OCI-LY7 (cell line): ENCODE measurements at regions of chr19 and their contacts with region 1.

Region 1: GRCh38 chr19:2084993-2085720 is 11.0 kb downstream of the MOB3A start:
- DNase-seq: peak; percentile 98
- H3K4me3 ChIP-seq: peak overlapping the region; percentile 85
- H3K27ac ChIP-seq: peak overlapping the region; percentile 94
- H3K4me1 ChIP-seq: peaks cover 80% of the 10 kb centered on the region
- CTCF ChIP-seq: no peak

Region 2: GRCh38 chr19:1672038-1672768 is 413.0 kb before region 1 on chr19:
- CTCF ChIA-PET with region 1: no interaction called
- POLR2A ChIA-PET with region 1: no interaction called
- intact Hi-C with region 1: loop called (anchors 5 kb)
- DNase-seq: peak; percentile 83
- H3K4me3 ChIP-seq: peak overlapping the region; percentile 65
- H3K27ac ChIP-seq: peak overlapping the region; percentile 98
- H3K4me1 ChIP-seq: peaks cover 56% of the 10 kb centered on the region
- CTCF ChIP-seq: peak; percentile 91

Region 3: DNA sequence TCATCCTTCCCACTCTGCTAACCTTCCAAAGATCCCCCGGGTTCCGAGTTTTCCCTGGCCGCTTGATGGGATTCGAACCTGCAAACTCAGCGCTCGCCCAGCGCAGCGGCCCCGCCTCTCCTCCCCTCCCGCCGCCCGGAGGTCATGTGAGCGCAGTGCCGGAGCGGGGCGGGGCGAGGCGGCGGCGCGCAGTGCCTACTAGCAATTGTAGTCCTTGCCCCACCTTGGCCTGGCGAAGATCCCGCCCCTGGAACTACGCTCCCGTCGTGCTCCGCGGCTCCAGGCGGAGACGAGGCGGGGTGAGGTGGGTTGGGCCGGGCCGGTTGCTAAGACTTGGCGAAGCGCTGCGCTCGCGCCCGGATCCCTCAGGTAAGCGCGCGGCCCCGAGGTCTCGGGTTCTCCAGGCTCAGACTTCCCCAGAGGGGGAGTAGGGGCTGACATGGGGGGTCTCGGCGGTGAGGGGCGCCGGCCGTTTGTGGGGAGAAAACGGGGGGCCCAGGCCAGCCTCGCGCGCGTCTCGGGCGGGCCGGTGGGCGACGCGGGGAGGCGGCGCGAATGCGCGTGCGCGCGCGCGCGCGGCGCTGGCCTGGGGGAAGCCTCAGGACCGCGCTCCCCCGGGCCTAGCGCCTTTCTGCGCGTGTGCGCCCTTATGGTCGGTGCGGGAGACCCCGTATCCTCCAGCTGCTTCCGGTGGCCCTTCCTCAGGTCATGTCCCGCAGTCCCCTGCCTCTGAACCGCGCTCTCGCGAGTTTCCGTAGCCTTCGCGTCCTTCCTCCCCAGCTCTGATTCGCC is 179.9 kb before region 1 on chr19 and contains the starts of genes ADAT3 and SCAMP4:
- CTCF ChIA-PET with region 1: no interaction called
- POLR2A ChIA-PET with region 1: interaction called, 4 read pairs
- intact Hi-C with region 1: loop called (anchors 10 kb)
- DNase-seq: peak; percentile 99
- H3K4me3 ChIP-seq: peak within 1 kb of the TSS; percentile 71
- H3K27ac ChIP-seq: peak within 1 kb of the TSS; percentile 97
- H3K4me1 ChIP-seq: peaks cover 32% of the 10 kb centered on the region
- CTCF ChIP-seq: no peak
- total RNA-seq, gene ADAT3: 5.6 and 7.9 TPM in 2 replicates
- total RNA-seq, gene SCAMP4: 13.4 and 21.3 TPM in 2 replicates

Region 4: DNA sequence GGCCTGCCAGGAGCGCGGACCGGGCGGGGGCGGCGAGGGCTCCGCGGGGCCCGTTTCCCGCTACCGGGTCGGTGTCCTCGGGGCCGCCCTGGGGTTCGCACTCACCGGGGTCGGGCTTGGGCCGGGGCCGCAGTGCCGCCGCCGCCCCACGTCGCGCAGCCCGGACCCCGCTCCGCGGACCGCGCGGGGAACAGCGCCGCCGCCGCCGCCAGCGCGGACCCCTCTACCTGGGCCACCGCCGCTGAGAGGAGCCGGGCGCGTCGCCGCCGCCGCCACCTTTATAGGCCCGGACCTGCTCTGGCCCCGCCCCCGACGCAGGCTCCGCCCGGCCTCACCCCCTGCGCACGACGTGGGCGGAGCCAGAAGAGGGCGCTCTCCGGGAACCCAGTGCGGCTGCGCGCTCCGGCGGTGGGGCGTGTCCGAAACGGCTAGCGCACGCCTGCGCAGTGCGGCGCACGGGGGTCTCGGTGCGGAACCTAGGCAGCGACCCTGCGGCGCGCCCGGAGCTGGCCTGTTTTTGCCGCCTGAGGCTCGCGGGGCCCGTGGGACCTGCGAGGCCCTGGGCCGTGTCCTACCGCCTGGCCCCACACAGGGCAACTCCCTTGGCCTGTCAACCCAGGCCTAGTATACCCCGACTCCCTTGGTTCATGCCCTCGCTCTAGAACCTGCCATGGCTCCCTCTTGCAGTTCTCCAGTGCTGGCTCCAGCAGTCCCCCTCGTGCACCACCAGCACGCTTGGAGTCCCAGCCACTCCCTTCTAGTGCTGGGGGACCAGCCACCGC is 34.0 kb before region 1 on chr19 and contains the start of gene MKNK2:
- CTCF ChIA-PET with region 1: no interaction called
- POLR2A ChIA-PET with region 1: interaction called, 10 read pairs
- intact Hi-C with region 1: loop called (anchors 2 kb)
- DNase-seq: peak; percentile 93
- H3K4me3 ChIP-seq: peak within 1 kb of the TSS; percentile 98
- H3K27ac ChIP-seq: peak within 1 kb of the TSS; percentile 70
- H3K4me1 ChIP-seq: peaks cover 58% of the 10 kb centered on the region
- CTCF ChIP-seq: peak; percentile 69
- total RNA-seq, gene MKNK2: 97.0 and 115 TPM in 2 replicates

Region 5: GRCh38 chr19:2061495-2062381 is 23.4 kb before region 1 on chr19:
- CTCF ChIA-PET with region 1: interaction called, 3 read pairs
- POLR2A ChIA-PET with region 1: interaction called, 6 read pairs
- intact Hi-C with region 1: loop called (anchors 2 kb)
- DNase-seq: peak; percentile 100
- H3K4me3 ChIP-seq: peak overlapping the region; percentile 80
- H3K27ac ChIP-seq: peak overlapping the region; percentile 73
- H3K4me1 ChIP-seq: peaks cover 65% of the 10 kb centered on the region
- CTCF ChIP-seq: 0 out of 2 replicates have a peak, but pooled peaks have one; percentile 27

Region 6: DNA sequence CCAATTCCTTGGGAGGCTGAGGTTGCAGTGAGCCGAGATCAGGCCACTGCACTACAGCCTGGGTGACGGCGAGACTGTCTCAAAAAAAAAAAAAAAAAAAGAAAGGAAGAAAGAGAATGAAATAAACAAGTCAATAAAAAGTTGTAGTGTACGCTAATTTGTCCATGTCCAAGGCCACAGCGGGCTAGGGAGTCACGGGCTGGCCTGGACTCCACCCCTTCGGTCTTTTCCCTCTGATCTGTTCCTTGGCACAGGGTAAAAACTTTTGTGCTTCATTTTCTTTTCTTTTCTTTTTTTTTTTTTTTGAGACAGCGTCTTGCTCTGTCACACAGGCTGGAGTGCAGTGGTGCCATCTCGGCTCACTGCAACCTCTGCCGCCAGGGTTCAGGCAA is 14.7 kb before region 1 on chr19:
- CTCF ChIA-PET with region 1: no interaction called
- POLR2A ChIA-PET with region 1: interaction called, 6 read pairs
- intact Hi-C with region 1: loop called (anchors 1 kb)
- DNase-seq: no peak
- H3K4me3 ChIP-seq: no peak overlapping the region
- H3K27ac ChIP-seq: no peak overlapping the region
- H3K4me1 ChIP-seq: peaks cover 36% of the 10 kb centered on the region
- CTCF ChIP-seq: no peak

Region 7: DNA sequence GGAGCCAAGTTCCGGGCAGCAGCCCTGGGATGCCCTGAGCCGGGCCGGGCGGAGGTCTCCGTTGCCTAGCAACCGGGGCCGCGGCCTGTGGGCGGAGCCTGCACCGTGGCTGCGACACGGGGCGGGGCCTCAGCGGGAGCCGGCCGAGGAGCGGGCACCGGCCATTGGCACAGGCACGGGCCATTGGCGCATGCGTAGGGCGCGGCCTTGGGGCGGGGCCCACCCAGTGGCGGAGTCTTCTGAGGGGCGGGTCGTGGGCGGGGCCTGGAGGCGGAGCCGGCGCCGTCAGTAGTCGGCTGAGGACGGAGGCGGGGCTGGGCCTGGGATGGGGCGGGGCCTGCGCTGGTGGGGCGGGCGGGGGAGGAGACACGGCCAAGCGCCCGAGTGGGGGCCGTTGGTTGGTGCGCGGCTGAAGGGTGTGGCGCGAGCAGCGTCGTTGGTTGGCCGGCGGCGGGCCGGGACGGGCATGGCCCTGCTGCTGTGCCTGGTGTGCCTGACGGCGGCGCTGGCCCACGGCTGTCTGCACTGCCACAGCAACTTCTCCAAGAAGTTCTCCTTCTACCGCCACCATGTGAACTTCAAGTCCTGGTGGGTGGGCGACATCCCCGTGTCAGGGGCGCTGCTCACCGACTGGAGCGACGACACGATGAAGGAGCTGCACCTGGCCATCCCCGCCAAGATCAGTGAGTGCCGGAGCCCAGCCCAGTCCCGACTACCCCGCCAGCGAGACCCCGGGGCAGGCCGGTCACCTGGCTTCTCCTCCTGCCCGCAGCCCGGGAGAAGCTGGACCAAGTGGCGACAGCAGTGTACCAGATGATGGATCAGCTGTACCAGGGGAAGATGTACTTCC is 11.5 kb after region 1 on chr19 and contains the start of gene IZUMO4:
- CTCF ChIA-PET with region 1: no interaction called
- POLR2A ChIA-PET with region 1: interaction called, 16 read pairs
- intact Hi-C with region 1: no loop called
- DNase-seq: peak; percentile 97
- H3K4me3 ChIP-seq: peak within 1 kb of the TSS; percentile 85
- H3K27ac ChIP-seq: peak within 1 kb of the TSS; percentile 94
- H3K4me1 ChIP-seq: peaks cover 33% of the 10 kb centered on the region
- CTCF ChIP-seq: peak; percentile 72
- total RNA-seq, gene IZUMO4: 11.2 and 12.9 TPM in 2 replicates

Region 8: GRCh38 chr19:2145831-2146241 is 60.7 kb after region 1 on chr19:
- CTCF ChIA-PET with region 1: no interaction called
- POLR2A ChIA-PET with region 1: no interaction called
- intact Hi-C with region 1: no loop called
- DNase-seq: no peak
- H3K4me3 ChIP-seq: no peak overlapping the region
- H3K27ac ChIP-seq: no peak overlapping the region
- H3K4me1 ChIP-seq: peaks cover 21% of the 10 kb centered on the region
- CTCF ChIP-seq: no peak